H1 (cell line): ENCODE measurements at regions of chr6 and their contacts with region 1.

Region 1: DNA sequence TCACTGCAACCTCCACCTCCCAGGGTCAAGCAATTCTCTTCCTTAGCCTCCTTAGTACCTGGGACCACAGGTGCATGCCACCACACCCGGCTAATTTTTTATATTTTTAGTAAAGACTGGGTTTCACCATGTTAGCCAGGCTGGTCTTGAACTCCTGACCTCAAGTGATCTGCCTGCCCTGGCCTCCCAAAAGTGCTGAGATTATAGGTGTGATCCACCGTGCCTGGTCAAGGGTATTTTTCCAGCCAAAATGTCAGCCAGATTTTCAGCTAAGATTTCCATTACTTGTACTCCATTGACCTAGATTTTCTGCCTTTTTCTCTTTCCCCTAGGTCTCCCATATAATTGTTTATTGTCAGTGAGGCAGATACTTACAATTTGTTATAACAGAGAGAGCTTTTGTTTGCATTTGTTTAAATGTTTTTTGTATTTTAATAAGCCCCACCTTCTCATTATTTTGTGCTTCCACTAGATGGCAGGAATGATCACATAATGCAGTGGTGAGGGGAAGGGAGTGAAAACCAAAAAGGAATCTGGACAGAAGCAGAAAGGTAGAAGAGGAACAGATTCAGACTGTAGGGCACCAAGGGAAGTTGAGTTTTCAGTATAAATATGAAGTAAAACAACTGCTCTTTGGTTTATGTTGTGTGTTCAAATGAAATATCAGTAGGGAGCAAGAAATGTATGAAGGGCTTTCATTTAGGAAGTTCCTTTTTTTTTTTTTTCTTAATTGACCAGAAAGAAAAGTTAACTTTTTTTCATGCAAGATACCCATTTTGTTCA is 29.7 kb downstream of the RPF2 start:
- DNase-seq: no peak
- H3K4me3 ChIP-seq: no peak overlapping the region
- H3K27ac ChIP-seq: no peak overlapping the region
- H3K4me1 ChIP-seq: no peaks in the 10 kb centered on the region
- H3K27me3 ChIP-seq: no peaks in the 10 kb centered on the region
- CTCF ChIP-seq: peak in 2 of 3 experiments; percentile 54 to 62; a peak in 3 of 4 replicates
- EP300 ChIP-seq: no peak
- POLR2A ChIP-seq: no peak
- RAD21 ChIP-seq: peak; percentile 83 to 86

Region 2: DNA sequence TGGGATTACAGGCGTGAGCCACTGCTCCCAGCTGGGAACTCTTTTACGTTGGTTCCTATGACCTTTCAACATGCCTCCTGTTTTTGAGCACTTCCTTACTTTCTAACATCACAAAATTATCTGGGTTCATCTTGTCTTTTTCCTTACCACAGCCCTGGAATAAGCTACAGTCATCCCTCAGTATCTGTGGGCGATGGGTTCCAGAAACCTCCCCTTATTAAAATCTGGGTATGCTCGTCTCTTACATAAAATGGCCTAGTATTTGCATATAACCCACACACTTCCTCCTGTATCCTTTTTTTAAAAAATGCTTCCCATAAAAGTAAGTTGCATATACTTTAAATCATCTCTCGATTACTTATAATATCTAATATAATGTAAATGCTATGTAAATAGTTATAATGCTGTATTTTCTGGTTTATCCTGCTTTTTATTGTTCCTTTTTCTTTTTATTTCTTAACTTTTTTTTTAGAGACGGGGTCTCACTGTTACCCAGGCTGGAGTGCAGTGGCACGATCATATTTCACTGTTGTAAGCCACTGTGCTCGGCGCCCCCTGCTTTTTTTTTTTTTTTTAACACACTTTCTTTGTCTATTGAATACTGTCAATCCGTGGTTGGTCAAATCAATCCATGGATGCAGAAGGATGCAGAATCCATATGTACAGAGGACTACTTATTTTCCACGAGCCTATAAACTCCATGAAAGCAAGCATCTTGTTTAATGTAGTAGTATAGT is 20.5 kb before region 1 on chr6:
- CTCF ChIA-PET with region 1: interaction called, 10 read pairs
- POLR2A ChIA-PET with region 1: no interaction called
- DNase-seq: no peak
- H3K4me3 ChIP-seq: no peak overlapping the region
- H3K27ac ChIP-seq: no peak overlapping the region
- H3K4me1 ChIP-seq: no peaks in the 10 kb centered on the region
- H3K27me3 ChIP-seq: no peaks in the 10 kb centered on the region
- CTCF ChIP-seq: no peak
- EP300 ChIP-seq: no peak
- POLR2A ChIP-seq: no peak
- RAD21 ChIP-seq: no peak

Region 3: GRCh38 chr6:111024681-111025080 is 13.1 kb after region 1 on chr6:
- CTCF ChIA-PET with region 1: interaction called, 24 read pairs
- POLR2A ChIA-PET with region 1: interaction called, 5 read pairs
- DNase-seq: no peak
- H3K4me3 ChIP-seq: no peak overlapping the region
- H3K27ac ChIP-seq: no peak overlapping the region
- H3K4me1 ChIP-seq: no peaks in the 10 kb centered on the region
- H3K27me3 ChIP-seq: no peaks in the 10 kb centered on the region
- CTCF ChIP-seq: no peak
- EP300 ChIP-seq: no peak
- POLR2A ChIP-seq: no peak
- RAD21 ChIP-seq: no peak

Region 4: DNA sequence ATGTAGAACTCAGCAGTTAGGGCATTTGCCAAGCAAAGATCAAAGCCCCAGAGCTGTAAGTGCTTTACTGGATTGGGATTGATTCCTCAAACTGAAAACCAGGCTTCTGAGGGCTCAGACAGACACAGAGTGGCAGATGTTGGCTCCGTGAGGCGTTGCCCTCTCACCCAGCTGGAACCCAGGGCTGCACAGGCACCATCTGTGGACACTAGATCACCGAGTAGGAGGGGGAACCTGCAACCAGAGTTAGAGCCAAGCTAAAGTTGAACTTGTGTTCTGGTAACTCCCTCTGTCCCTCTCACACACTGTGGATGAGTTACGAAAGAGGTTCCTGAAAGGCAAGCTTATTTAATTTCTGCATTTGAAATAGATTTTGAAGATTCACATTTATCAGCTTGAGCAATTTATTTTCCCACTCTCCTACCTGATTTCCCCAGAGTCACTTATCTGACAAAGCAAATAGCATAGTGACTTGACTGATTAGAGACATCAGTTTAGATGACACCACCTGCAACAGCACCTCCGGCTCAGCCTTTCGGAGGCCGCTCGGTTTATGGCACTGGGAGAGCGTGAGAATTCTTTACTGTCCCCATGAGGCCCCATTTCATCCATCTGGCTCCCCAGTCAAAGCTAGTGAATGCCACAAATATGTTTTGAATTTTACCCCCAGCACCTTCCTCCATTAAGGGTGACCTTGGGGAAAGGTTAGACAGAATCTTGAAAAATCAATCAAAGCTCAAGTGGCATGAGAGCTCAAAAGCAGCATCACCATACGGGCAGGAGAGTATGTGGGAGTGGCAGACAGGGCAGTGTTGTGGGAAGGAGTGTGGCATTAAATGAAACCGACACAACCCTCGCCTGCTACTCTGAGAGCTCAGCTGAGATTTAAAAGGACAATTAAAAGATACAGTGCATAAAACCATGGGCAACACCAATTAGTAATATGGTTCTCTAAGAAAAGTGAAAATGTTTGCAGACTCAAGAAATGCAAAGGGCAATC is 18.8 kb after region 1 on chr6:
- CTCF ChIA-PET with region 1: interaction called, 24 read pairs
- POLR2A ChIA-PET with region 1: interaction called, 3 read pairs
- DNase-seq: no peak
- H3K4me3 ChIP-seq: no peak overlapping the region
- H3K27ac ChIP-seq: no peak overlapping the region
- H3K4me1 ChIP-seq: peaks cover 3 to 15% (median 8%) of the 10 kb centered on the region in 4 experiments; a peak in 6 of 7 replicates
- H3K27me3 ChIP-seq: no peaks in the 10 kb centered on the region
- CTCF ChIP-seq: no peak
- EP300 ChIP-seq: no peak
- POLR2A ChIP-seq: no peak
- RAD21 ChIP-seq: no peak